Cardiac septum (tissue), 1 donor: ENCODE measurements at regions of chr7 and their contacts with region 1.

Region 1: GRCh38 chr7:131040467-131040932 is 287.2 kb upstream of the MKLN1 start:
- DNase-seq: no peak

Region 2: GRCh38 chr7:130896898-130897514 is 143.5 kb before region 1 on chr7:
- intact Hi-C with region 1: loop called (anchors 1 kb)
- DNase-seq: peak; percentile 84

Region 3: DNA sequence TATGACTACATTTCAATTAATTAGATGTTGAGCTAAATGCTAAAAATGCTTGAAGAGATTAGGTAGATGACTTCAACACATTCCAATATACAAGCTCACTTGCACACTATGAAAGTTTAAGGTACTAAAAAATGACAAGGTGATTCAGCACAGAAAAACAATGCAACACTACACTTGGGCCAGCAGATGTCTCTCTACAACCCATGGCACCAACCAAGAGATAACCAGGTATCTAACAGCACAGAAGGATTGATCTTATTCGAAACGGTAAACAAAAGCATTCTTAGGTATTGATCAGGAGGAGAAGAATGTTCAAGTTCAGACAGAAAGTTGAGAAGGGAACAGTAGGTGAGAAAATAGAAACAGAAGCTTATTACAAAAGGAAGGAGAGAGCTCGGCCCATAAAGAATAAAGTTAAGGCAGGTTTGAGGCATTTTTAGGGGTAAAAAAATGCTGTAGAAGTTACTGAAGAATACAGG is 58.3 kb before region 1 on chr7:
- intact Hi-C with region 1: loop called (anchors 5 kb)
- DNase-seq: no peak

Region 4: DNA sequence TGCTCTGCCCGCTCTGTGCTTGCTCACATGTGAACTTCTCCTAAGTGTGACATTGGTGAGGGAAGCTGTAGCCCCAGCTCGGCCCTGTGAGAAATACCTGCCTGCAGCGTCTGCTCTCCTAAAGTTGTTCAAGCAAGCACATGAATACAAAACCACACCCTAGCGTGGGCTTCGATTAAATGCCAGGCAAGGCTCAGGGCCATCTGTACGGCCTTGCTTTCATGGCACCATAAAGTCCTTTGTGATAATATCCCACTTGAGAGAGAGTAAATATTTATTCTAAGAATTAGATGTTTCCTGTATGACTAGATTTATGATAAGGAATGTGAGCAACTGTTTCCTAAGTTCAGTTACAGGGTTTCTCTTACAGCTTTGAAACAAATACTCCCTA is 43.7 kb before region 1 on chr7:
- intact Hi-C with region 1: loop called (anchors 5 kb)
- DNase-seq: no peak

Region 5: GRCh38 chr7:131011976-131012375 is 28.5 kb before region 1 on chr7:
- intact Hi-C with region 1: no loop called
- DNase-seq: no peak

Region 6: DNA sequence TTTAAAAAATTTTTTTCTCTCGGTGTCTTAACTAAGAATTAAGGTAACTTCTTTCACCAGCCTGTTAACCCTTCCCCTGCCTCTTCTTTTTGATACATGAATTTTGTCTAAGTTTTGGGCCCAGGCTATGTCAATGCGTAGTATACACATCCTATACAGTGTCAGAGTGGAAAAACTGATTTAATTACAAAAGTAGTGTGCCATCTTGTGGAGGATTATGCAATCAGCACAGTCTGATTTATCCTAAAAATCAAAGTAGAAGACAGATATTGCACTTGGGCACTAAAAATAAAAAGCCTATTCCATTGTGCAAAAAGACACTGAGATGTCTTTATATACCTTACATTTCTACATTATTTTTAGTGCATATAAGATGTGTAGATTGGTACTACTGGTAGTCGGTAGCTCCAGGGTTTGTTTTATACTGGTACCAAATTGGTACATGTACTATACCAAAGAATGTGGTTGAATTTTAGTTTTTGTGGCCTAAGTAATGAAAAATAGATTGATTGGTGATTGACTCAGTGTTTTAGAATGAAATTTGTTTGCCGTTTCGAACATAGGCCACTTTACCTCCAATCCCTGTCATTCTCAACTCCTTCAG is 383.8 kb after region 1 on chr7:
- intact Hi-C with region 1: no loop called
- DNase-seq: no peak